Mammary epithelial cell (primary cell): ENCODE measurements at regions of chr12 and their contacts with region 1.

Region 1: GRCh38 chr12:51714666-51715065 is 123.6 kb downstream of the SCN8A start:
- DNase-seq: no peak
- H3K4me3 ChIP-seq: no peak overlapping the region
- H3K27ac ChIP-seq: no peak overlapping the region
- H3K4me1 ChIP-seq: no peaks in the 10 kb centered on the region
- H3K27me3 ChIP-seq: no peaks in the 10 kb centered on the region
- CTCF ChIP-seq: no peak

Region 2: GRCh38 chr12:51779876-51780275 is 65.2 kb after region 1 on chr12:
- CTCF ChIA-PET with region 1: no interaction called
- dilution Hi-C with region 1: loop called (anchors 5 kb)
- in situ Hi-C with region 1: no loop called
- intact Hi-C with region 1: no loop called
- DNase-seq: no peak
- H3K4me3 ChIP-seq: no peak overlapping the region
- H3K27ac ChIP-seq: no peak overlapping the region
- H3K4me1 ChIP-seq: no peaks in the 10 kb centered on the region
- H3K27me3 ChIP-seq: no peaks in the 10 kb centered on the region
- CTCF ChIP-seq: no peak